Prostate gland (tissue), 2 donors: ENCODE measurements at regions of chr13 and their contacts with region 1.

Region 1: DNA sequence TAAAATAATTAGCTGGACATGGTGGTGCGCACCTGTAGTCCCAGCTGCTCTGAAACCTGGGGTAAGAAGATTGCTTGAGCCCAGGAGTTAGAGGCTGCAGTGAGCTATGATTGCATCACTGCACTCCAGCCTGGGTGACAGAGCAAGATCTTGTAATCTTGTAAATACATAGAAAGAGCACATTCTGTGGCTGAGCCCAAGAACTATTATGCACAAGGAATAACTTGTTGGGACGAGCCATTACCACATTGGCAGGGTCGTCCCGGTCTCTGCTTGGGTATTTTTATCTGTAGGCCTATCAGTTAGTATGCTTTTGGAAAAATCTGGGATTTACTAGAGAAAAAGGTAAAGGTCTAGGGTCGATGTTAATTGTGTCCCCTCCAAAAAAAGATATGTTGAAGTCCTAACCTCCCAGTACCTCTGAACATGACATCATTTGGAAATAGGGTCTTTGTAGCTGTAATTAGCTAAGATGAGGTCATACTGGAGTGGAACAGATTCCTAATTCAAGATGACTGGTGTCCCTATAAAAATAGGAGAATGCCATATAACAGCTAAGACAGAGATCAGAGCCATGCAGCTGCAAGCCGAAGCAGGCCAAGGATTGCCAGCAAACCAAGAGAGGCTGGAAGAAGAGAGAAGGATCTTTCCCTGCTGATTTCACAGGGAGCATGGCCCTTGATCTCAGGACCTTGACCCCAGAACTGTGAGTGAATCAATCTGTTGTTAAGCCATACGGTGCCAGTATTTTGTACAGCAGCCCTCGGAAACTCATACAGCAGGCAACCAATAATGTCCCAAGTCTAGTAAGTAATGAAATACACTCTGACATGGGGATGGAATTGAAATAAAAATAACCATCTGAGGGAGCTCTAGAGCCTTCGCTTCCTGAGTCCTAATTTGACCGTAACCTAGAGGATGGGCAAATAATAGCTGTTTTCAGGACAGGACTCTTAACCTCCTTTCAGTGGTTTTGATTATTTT is 77.0 kb downstream of the TM9SF2 start:
- DNase-seq: no peak
- H3K4me3 ChIP-seq: no peak overlapping the region
- H3K27ac ChIP-seq: no peak overlapping the region
- H3K4me1 ChIP-seq: no peaks in the 10 kb centered on the region
- H3K27me3 ChIP-seq: no peaks in the 10 kb centered on the region
- CTCF ChIP-seq: peak in 1 of 4 experiments; percentile 22
- POLR2A ChIP-seq: no peak

Region 2: GRCh38 chr13:98108341-98108740 is 1469.9 kb before region 1 on chr13:
- intact Hi-C with region 1: no loop called
- DNase-seq: no peak
- H3K4me3 ChIP-seq: no peak overlapping the region
- H3K27ac ChIP-seq: no peak overlapping the region
- H3K4me1 ChIP-seq: no peaks in the 10 kb centered on the region
- H3K27me3 ChIP-seq: no peaks in the 10 kb centered on the region
- CTCF ChIP-seq: no peak
- POLR2A ChIP-seq: no peak

Region 3: GRCh38 chr13:98977568-98978265 is 600.5 kb before region 1 on chr13 and contains the start of gene DOCK9:
- intact Hi-C with region 1: no loop called
- DNase-seq: peak; percentile 58
- H3K4me3 ChIP-seq: peak within 1 kb of the TSS; percentile 21 to 40
- H3K27ac ChIP-seq: peak within 1 kb of the TSS; percentile 8 to 65
- H3K4me1 ChIP-seq: no peaks in the 10 kb centered on the region
- H3K27me3 ChIP-seq: no peaks in the 10 kb centered on the region
- CTCF ChIP-seq: no peak
- POLR2A ChIP-seq: no peak
- total RNA-seq, gene DOCK9: 107 to 117 TPM

Region 4: GRCh38 chr13:101262306-101262705 is 1684.1 kb after region 1 on chr13:
- intact Hi-C with region 1: loop called (anchors 10 kb)
- DNase-seq: no peak
- H3K4me3 ChIP-seq: no peak overlapping the region
- H3K27ac ChIP-seq: no peak overlapping the region
- H3K4me1 ChIP-seq: no peaks in the 10 kb centered on the region
- H3K27me3 ChIP-seq: no peaks in the 10 kb centered on the region
- CTCF ChIP-seq: no peak
- POLR2A ChIP-seq: no peak